Tibial artery (tissue), 4 donors: ENCODE measurements at regions of chr17 and their contacts with region 1.

Region 1: DNA sequence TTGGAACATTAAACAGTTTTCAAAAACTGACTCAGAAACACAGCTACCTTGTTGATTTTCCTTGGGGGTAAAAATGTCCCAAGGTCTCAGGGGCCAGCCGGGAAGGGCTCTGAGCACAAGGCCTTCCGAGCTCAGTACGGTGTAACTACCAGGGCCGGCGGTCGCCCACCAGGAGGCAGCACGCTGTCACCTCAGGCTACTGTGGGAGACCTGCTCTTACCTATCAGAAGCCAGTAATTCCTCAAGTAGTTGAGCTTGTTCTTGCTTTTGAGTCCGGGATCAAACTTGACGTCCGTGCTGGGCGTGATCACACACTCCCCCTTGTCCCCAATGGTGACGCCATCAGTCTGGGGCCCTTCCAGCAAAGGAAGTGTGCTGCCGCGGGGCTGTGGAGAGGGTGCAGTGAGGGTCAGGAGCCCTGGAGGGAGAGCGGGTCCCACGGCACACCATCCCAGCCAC is 43.4 kb upstream of the ICAM2 start:
- DNase-seq: peak in 1 of 2 donors; percentile 47
- H3K4me3 ChIP-seq: no peak overlapping the region
- H3K27ac ChIP-seq: no peak overlapping the region
- H3K4me1 ChIP-seq: no peaks in the 10 kb centered on the region
- H3K27me3 ChIP-seq: no peaks in the 10 kb centered on the region
- CTCF ChIP-seq: peak; percentile 45

Region 2: DNA sequence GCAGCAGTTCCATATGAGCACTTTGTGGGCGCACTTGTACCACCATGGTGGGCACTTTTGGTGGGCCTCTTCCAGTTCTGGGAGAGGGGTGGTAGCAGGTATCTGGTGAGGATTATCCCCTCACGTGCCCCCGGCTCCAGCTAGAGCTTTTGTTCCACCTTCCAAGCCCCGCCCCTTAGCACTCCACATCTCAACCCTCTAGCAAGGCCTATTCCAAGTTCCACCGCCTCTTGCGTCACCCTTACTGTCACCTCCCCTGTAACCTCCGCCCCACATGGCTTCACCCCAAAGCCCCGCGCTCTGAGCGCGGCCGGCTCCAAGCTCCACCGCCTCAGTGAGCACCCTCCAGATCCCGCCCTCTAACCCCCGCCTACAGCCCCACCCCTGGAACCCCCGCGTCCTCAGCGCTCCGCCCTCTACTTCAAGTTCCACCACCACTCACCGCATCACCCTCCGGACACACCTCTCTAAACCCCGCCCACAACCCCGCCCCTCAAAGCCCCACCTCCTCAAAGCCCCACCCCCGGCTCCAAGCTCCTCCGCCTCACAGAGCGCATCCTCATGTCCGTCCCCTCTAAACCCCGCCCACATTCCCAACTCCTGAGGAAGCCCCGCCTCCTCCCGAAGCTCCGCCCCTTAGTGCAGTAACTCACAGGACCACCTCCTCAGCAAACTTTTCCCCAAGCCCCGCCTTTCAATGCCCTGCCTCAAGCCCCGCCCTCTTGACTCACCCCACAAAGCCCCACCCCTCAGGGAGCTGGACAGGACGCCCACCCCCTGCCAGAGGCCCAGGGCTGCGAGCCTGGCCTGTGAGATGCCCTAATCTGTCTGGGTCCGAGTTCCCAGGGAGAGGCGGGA is 102.2 kb before region 1 on chr17:
- intact Hi-C with region 1: no loop called
- DNase-seq: peak; percentile 61 to 73
- H3K4me3 ChIP-seq: peak overlapping the region in 1 of 2 donors; percentile 28
- H3K27ac ChIP-seq: no peak overlapping the region
- H3K4me1 ChIP-seq: peaks cover 0 to 10% (median 6%) of the 10 kb centered on the region in 4 donors
- H3K27me3 ChIP-seq: peaks cover 0 to 13% of the 10 kb centered on the region in 2 donors
- CTCF ChIP-seq: no peak

Region 3: DNA sequence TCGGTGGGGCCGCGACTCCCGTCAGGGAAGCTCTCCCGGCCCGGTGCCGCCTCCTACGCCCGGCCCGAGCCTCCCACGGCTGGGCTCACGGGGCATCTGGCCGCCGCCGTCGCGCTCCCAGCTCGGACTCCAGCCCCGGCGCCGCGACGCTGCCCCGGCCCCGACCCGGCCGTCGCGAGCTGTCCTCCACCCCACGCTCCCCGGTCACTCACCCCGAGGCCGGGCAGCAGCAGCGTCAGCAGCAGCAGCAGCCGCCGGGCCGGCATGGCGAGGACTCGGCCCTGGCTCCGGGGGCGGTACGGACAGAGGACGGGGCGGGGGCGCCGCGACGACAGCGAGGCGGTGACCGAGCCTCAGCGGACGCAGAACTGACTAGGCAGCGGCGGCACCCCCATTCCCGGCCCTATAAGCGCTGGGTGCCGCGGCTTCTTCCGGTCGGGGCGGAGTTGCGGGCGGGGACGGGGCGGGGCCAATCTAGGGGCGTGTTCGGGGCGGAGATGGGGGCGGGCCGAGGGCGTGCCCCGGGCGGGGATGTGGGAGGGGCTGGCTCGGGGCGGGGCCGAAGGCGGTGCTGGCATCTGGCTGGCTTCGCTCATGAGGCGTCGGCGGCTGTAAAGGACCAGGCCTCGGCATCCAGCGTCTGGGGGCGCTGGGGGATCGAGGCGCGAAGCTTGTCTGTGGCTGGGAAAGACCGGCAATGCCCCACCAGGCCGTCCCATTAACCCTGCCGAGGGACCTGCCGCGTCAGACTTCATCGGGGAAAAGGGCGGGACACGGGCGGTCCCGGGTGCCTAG is 66.2 kb after region 1 on chr17 and contains the start of gene ERN1:
- intact Hi-C with region 1: loop called (anchors 10 kb)
- DNase-seq: peak; percentile 93 to 96
- H3K4me3 ChIP-seq: peak within 1 kb of the TSS; percentile 92 to 95
- H3K27ac ChIP-seq: peak within 1 kb of the TSS; percentile 98 to 99
- H3K4me1 ChIP-seq: peaks cover 0 to 36% (median 15%) of the 10 kb centered on the region in 4 donors
- H3K27me3 ChIP-seq: no peaks in the 10 kb centered on the region
- CTCF ChIP-seq: no peak

Region 4: GRCh38 chr17:64145757-64146417 is 82.1 kb after region 1 on chr17:
- intact Hi-C with region 1: no loop called
- DNase-seq: peak; percentile 98
- H3K4me3 ChIP-seq: peak overlapping the region; percentile 74 to 96
- H3K27ac ChIP-seq: peak overlapping the region; percentile 92 to 98
- H3K4me1 ChIP-seq: peaks cover 0 to 21% (median 18%) of the 10 kb centered on the region in 4 donors
- H3K27me3 ChIP-seq: no peaks in the 10 kb centered on the region
- CTCF ChIP-seq: peak in 1 of 2 experiments; percentile 37